GM12878 (cell line): ENCODE measurements at regions of chr15 and their contacts with region 1.

Region 1: GRCh38 chr15:50247819-50248655 is 17.5 kb downstream of the HDC start:
- DNase-seq: no peak
- ATAC-seq: peak; percentile 95
- H3K4me3 ChIP-seq: no peak overlapping the region
- H3K27ac ChIP-seq: peak overlapping the region; percentile 46; the same call in 1 of the 2 replicates
- H3K4me1 ChIP-seq: peaks cover 8% of the 10 kb centered on the region
- H3K27me3 ChIP-seq: no peaks in the 10 kb centered on the region
- CTCF ChIP-seq: no peak
- EP300 ChIP-seq: no peak
- POLR2A ChIP-seq: peak; percentile 60
- RAD21 ChIP-seq: no peak

Region 2: GRCh38 chr15:50218691-50219090 is 29.3 kb before region 1 on chr15:
- CTCF ChIA-PET with region 1: no interaction called
- POLR2A ChIA-PET with region 1: interaction called, 11 read pairs
- RAD21 ChIA-PET with region 1: no interaction called
- SMC1A ChIA-PET with region 1: no interaction called
- in situ Hi-C with region 1: no loop called
- intact Hi-C with region 1: no loop called
- DNase-seq: no peak
- ATAC-seq: no peak
- H3K4me3 ChIP-seq: no peak overlapping the region
- H3K27ac ChIP-seq: no peak overlapping the region
- H3K4me1 ChIP-seq: no peaks in the 10 kb centered on the region
- H3K27me3 ChIP-seq: no peaks in the 10 kb centered on the region
- CTCF ChIP-seq: no peak
- EP300 ChIP-seq: no peak
- POLR2A ChIP-seq: no peak
- RAD21 ChIP-seq: no peak

Region 3: DNA sequence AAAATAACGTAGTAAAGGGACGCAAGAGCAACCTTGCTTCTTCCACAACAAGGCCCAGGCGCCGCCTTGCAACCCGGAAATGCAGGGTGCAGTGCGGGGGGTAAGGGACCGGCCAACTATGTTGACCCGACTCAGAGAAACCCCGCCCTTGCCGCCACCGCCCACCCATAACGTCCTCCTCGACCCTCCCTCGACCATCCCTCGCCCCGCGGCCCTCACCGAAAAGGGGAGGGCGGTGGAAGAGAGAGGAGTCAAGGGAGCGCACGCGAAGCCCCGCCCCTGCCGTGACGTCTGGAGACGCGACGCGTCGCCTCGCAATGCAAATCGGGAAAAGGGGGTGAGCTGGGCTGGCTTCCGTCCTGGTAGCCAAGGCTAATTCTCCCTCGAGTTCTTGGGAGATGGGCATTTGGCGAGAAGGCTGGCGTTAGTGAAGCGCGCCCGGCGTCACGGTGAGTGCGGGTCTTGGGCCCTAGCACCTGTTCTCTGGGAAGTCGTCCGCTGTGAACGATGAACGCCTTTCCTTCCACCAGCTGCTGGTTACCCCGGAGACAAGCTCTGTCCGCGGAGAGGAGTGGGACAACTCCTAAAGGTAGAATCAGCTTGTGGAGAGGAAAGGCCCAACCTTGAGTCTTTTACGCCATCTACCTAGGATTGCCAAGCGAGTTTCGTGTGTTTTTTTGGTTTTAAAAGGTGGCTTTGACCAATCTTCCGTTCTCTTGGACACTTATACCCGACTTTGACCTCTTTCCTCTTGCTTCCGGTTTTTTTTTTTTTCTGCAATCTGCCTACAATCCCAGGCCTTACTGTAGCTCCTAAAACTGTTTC is 176.2 kb after region 1 on chr15 and contains the start of gene USP8:
- CTCF ChIA-PET with region 1: no interaction called
- POLR2A ChIA-PET with region 1: interaction called, 14 read pairs
- RAD21 ChIA-PET with region 1: no interaction called
- SMC1A ChIA-PET with region 1: no interaction called
- in situ Hi-C with region 1: no loop called
- intact Hi-C with region 1: no loop called
- DNase-seq: peak; percentile 85
- ATAC-seq: peak; percentile 96
- H3K4me3 ChIP-seq: peak within 1 kb of the TSS; percentile 85
- H3K27ac ChIP-seq: peak within 1 kb of the TSS; percentile 86
- H3K4me1 ChIP-seq: peaks cover 5% of the 10 kb centered on the region
- H3K27me3 ChIP-seq: no peaks in the 10 kb centered on the region
- CTCF ChIP-seq: no peak
- EP300 ChIP-seq: no peak
- POLR2A ChIP-seq: peak; percentile 92
- RAD21 ChIP-seq: 0 out of 2 replicates have a peak, but pooled peaks have one; percentile 8
- polyA plus RNA-seq, gene USP8: 25.2 to 30.2 TPM